ENCODE measurements at regions of chr2 and their contacts with region 1.

Region 1: DNA sequence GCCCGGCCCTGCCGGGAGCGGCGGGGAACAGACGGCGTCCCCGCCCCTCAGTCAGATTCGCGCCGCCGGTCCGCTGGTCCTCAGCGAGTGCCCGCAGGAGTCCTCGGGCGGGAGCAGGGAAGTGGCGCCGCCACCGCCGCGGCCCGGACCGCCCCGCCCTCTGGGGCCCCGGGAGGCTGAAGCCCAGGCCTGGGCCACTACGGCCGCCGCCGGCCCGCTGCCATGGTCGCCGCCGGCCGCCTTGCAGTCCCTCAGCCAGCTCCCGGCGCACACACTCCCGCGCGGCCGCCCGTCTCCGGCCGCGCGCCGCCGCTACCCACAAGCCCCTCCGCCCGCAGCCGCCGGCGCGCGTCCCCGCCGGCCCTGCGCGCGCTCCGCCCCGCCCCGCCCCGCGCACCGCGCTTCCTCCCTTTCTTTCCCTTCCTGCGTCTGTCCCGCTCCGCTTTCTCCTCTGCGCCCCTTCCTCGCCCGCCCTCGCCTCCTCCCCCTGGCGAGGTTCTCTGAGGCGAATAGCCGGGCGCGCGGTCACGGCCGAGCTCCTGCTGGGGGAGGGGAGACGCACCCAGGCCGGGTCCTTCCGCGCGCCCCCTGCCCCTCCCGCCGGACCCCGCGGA is at the start of gene ROCK2:
- DNase-seq: peak; percentile 82
- H3K4me3 ChIP-seq: peak within 1 kb of the TSS; percentile 79 to 94 (median 92)
- H3K27ac ChIP-seq: peak within 1 kb of the TSS; percentile 98
- H3K4me1 ChIP-seq: peaks cover 25% of the 10 kb centered on the region
- H3K27me3 ChIP-seq: no peaks in the 10 kb centered on the region
- CTCF ChIP-seq: no peak
- POLR2A ChIP-seq: peak; percentile 73
- total RNA-seq, gene ROCK2: 54.3 and 56.5 TPM in 2 replicates

Region 2: DNA sequence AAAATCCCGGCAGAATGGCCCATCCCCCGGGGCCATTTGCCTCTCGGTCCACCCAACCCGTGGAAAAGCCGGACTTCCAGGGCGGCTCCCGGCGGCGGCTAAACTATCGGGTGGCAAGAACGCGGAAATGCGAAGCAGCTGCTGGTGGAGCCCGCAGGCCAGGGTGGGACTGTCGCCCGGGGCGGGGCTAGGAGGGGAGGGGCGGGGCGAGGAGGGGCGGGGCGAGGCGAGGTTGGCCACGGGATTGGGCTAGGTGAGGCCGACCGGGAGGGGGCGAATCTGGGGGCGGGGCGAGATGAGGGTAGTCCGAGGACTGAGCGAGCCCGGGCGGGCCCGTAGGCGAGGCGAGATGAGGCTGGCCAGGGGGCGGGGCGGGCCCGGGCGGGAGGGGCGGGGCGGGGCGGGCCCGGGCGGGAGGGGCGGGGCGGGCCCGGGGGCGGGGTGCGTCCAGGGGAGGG is 189.5 kb before region 1 on chr2:
- CTCF ChIA-PET with region 1: interaction called, 5 read pairs
- POLR2A ChIA-PET with region 1: interaction called, 3 read pairs
- dilution Hi-C with region 1: no loop called
- intact Hi-C with region 1: loop called (anchors 2 kb)
- DNase-seq: peak; percentile 91
- H3K4me3 ChIP-seq: peak overlapping the region; percentile 50 to 62 (median 61)
- H3K27ac ChIP-seq: peak overlapping the region; percentile 90
- H3K4me1 ChIP-seq: peaks cover 11% of the 10 kb centered on the region
- H3K27me3 ChIP-seq: no peaks in the 10 kb centered on the region
- CTCF ChIP-seq: no peak
- POLR2A ChIP-seq: no peak

Region 3: DNA sequence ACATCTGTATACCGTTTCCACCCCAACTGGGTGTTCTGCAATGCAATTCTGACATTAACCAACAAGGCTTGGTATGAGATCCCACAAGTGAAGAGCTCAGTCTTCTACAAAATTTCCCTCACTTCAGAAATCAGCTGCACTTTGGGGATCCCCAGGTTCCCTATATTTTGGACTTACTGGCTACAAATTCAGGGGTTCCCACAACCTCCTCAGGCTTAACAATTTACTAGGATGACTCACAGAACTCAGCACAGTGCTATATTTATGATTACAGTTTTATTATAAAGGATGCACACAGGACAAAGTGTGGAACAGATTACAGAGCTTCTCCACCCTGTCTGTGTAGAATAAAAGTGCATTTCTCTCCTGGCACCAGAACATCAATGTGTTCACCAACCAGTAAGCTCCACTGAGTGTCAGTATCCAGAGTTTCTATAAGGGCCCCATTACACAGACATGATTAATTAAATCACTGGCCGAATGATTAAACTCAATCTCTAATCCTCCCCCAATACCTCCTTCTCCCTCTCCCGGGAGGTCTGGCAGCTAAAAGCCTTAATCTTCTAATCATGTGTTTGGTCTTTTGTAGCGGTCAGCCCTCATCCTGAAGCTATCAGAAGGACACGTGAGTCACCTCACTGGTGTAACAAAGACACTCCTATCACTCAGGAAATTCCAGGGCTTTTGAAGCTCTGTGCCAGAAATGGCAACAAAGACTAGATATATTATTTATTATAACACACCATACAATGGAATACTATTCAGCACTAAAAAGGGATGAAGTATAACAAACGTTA is 104.6 kb before region 1 on chr2:
- CTCF ChIA-PET with region 1: interaction called, 51 read pairs
- POLR2A ChIA-PET with region 1: interaction called, 3 read pairs
- dilution Hi-C with region 1: no loop called
- intact Hi-C with region 1: loop called (anchors 1 kb)
- DNase-seq: peak; percentile 50
- H3K4me3 ChIP-seq: no peak overlapping the region
- H3K27ac ChIP-seq: peak overlapping the region; percentile 10
- H3K4me1 ChIP-seq: peaks cover 4% of the 10 kb centered on the region
- H3K27me3 ChIP-seq: no peaks in the 10 kb centered on the region
- CTCF ChIP-seq: no peak
- POLR2A ChIP-seq: no peak

Region 4: DNA sequence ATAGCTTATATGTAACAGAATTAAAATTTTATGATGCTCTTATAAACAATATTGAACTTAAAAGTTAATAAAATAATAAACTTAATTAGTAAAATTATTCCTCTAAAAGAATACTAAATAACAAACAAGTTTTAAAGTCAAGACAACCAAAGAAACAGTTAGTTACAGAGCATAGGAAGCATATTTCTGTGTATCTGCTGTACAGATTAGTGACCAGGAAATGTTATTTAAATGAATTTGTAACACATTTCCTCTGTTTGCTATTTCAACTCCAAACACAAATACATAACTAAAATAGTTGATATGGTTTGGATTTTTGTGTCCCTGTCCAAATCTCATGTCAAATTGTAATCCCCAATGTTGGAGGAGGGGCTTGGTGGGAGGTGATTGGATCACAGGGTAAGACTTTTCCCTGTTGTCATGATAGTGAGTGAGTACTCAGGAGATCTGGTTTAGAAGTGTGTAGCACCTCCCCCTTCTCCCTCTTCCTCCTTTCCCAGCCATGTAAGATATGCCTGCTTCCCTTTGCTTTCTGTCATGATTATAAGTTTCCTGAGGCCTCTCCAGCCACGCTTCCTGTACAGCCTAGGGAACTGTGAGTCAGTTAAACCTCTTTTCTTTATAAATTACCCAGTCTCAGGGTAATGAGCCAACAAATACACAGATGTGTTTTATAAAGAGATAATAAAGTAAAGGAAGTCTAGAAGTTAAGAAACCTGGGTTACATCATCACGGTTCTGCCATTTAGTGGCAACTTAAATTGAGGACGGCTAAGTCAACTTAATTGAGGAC is 51.8 kb before region 1 on chr2:
- CTCF ChIA-PET with region 1: no interaction called
- POLR2A ChIA-PET with region 1: no interaction called
- dilution Hi-C with region 1: no loop called
- intact Hi-C with region 1: loop called (anchors 2 kb)
- DNase-seq: peak; percentile 93
- H3K4me3 ChIP-seq: no peak overlapping the region
- H3K27ac ChIP-seq: peak overlapping the region; percentile 73
- H3K4me1 ChIP-seq: peaks cover 32% of the 10 kb centered on the region
- H3K27me3 ChIP-seq: no peaks in the 10 kb centered on the region
- CTCF ChIP-seq: no peak
- POLR2A ChIP-seq: no peak

Region 5: DNA sequence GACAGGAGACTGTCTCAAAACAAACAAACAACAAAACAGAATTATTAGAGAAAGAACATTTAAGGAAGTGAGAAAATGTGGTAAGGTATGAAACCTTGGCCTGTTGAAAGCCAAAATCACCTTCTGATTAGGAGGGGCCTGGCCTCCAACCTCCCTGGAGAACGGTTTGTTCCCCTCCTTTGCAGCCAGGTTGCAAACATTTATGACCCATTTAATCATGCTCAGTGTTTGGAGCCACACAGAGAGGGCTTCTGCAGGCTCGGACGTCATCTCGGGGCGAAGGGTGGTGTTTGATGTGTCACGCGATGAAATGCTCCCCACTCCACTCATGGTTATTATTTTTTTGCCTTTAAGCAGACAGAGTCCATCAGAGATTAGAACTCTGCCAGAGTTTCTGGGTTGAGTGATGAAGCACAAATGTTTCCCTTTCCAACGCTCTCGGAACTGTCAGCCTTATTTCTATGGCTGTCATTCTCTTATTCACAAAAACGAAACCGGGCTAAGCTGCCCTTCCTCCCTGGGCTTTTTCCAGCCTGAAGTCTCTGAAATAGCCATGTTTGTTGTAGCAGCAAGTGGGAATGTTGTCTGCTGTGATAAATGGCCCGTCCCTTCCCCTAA is 33.6 kb after region 1 on chr2:
- CTCF ChIA-PET with region 1: interaction called, 26 read pairs
- POLR2A ChIA-PET with region 1: interaction called, 10 read pairs
- dilution Hi-C with region 1: no loop called
- intact Hi-C with region 1: loop called (anchors 2 kb)
- DNase-seq: no peak
- H3K4me3 ChIP-seq: no peak overlapping the region
- H3K27ac ChIP-seq: no peak overlapping the region
- H3K4me1 ChIP-seq: peaks cover 15% of the 10 kb centered on the region
- H3K27me3 ChIP-seq: no peaks in the 10 kb centered on the region
- CTCF ChIP-seq: no peak
- POLR2A ChIP-seq: no peak

Region 6: DNA sequence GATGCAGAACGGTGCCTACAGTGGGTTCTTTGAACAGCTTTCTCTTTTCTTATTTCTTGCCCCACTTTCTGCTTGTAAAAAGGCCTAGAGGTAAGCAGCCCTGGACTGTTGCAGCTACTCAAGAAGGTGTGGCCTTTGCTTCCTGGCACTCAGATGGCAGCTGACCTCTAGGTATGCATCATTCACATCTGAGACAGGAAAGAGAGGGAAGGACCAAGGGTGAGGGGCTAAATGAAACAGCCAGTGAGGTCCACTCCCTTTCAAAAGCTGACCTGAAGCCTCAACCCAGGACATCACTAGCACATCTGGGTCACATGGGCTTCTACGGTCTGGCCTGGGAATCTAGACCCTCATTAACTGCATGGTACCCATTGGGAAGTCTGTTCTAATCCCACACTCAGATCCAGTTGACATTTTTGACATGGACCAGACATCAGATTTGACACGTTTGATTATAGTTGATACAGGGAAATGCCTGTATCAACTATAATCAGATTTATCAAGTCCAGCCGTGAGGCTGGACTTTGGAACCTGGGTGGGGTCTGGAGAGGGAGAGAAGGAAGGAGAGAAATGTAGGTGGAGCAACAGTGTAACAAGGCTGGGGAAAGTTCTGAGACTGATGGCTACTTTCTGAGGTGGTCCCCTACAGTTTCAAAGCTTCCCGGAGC is 61.3 kb after region 1 on chr2:
- CTCF ChIA-PET with region 1: interaction called, 67 read pairs
- POLR2A ChIA-PET with region 1: interaction called, 11 read pairs
- dilution Hi-C with region 1: no loop called
- intact Hi-C with region 1: loop called (anchors 1 kb)
- DNase-seq: no peak
- H3K4me3 ChIP-seq: no peak overlapping the region
- H3K27ac ChIP-seq: no peak overlapping the region
- H3K4me1 ChIP-seq: peaks cover 6% of the 10 kb centered on the region
- H3K27me3 ChIP-seq: no peaks in the 10 kb centered on the region
- CTCF ChIP-seq: no peak
- POLR2A ChIP-seq: no peak